ENCODE measurements at regions of chr3 and their contacts with region 1.

Region 1: GRCh38 chr3:99172736-99173657 is 271.5 kb upstream of the DCBLD2 start:
- DNase-seq: peak; percentile 76
- H3K4me3 ChIP-seq: no peak overlapping the region
- H3K27ac ChIP-seq: no peak overlapping the region
- H3K4me1 ChIP-seq: no peaks in the 10 kb centered on the region
- H3K27me3 ChIP-seq: no peaks in the 10 kb centered on the region
- CTCF ChIP-seq: peak; percentile 72 to 74
- POLR2A ChIP-seq: no peak

Region 2: DNA sequence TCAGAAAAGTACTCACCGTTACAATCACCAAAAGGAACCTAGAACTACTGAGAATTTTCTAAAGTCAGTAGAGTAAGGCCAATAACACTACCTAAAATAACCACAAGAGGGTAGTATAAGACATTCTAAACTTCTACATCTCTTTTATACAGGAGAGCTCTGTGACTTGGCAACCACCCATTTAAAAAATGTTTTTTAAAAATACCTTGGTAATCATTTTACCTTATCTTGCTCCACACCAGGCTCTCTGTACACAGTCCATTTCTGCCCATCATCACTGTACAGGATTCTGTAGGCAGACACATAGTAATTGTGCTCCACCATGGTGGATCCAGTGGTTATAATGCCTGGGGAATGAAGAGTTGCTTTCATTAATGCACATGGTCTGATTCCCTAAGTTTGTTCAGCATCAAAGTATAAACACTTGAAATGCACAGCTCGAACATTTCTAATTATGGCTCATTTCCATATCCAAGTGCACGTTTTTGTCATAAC is 355.4 kb before region 1 on chr3:
- CTCF ChIA-PET with region 1: interaction called, 15 read pairs
- POLR2A ChIA-PET with region 1: no interaction called
- dilution Hi-C with region 1: no loop called
- intact Hi-C with region 1: loop called (anchors 5 kb)
- DNase-seq: peak; percentile 66
- H3K4me3 ChIP-seq: no peak overlapping the region
- H3K27ac ChIP-seq: peak overlapping the region; percentile 34
- H3K4me1 ChIP-seq: peaks cover 8% of the 10 kb centered on the region
- H3K27me3 ChIP-seq: no peaks in the 10 kb centered on the region
- CTCF ChIP-seq: peak; percentile 27 to 34
- POLR2A ChIP-seq: no peak

Region 3: DNA sequence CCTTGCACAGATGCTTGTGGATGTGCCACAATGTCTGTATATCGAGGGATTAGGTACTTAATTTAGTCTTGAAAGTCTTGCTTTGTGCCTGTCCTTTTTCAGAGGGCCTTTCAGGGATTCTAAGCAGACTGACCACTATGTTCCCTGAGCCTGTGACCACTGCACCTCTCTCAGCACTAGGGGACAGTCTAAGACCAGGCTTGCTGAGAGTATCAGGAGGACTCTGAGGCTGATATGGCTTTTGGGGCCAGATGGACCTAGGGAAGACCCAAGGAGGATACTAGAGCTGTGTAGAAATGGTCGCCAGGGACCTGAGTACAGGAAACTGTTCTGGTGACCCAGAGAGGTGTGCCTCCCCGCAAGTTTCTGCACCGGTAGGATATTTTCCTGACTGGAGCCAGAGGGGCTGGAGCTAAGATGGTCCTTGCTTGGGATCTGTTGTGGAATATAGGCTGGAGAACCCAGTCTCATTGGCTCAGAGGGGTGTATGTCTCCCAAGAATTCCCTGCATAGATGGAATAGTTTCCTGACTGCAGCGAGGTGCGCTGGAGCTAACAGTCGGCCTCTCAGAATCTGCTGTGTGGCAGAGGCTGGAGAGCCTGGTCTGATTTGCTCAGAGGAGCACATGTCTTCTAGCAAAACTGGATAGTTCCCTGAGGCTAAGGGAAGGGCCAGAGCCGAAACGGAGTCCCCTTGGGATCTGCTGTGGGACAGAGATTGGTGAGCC is 58.3 kb before region 1 on chr3:
- CTCF ChIA-PET with region 1: interaction called, 111 read pairs
- POLR2A ChIA-PET with region 1: no interaction called
- dilution Hi-C with region 1: no loop called
- intact Hi-C with region 1: loop called (anchors 1 kb)
- DNase-seq: peak; percentile 70
- H3K4me3 ChIP-seq: no peak overlapping the region
- H3K27ac ChIP-seq: no peak overlapping the region
- H3K4me1 ChIP-seq: peaks cover under 1% of the 10 kb centered on the region
- H3K27me3 ChIP-seq: no peaks in the 10 kb centered on the region
- CTCF ChIP-seq: peak; percentile 90 to 91
- POLR2A ChIP-seq: no peak

Region 4: DNA sequence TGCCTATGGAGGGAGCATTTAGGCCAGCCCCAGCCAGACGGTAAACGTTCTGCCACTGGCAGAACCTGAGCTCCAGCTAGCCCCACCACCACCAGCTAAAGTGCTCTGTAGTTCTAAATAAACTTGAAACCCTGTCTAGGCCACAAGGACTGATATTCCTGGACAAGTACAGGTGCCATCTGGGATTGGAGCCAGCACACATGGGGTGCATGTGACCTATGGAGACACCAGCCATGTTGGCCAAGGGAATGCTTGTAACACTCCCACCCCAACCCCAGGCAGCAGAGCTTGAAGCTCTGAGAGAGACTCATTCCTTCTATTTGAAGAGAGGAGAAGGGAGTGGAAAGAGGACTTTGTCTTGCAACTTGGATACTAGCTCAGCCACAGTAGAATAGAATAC is 13.0 kb after region 1 on chr3:
- CTCF ChIA-PET with region 1: interaction called, 14 read pairs
- POLR2A ChIA-PET with region 1: no interaction called
- dilution Hi-C with region 1: no loop called
- intact Hi-C with region 1: no loop called
- DNase-seq: no peak
- H3K4me3 ChIP-seq: no peak overlapping the region
- H3K27ac ChIP-seq: no peak overlapping the region
- H3K4me1 ChIP-seq: no peaks in the 10 kb centered on the region
- H3K27me3 ChIP-seq: no peaks in the 10 kb centered on the region
- CTCF ChIP-seq: no peak
- POLR2A ChIP-seq: no peak

Region 5: GRCh38 chr3:99638167-99638948 is 465.4 kb after region 1 on chr3 and contains the start of gene COL8A1:
- CTCF ChIA-PET with region 1: no interaction called
- POLR2A ChIA-PET with region 1: no interaction called
- dilution Hi-C with region 1: no loop called
- intact Hi-C with region 1: loop called (anchors 5 kb)
- DNase-seq: peak; percentile 94
- H3K4me3 ChIP-seq: peak within 1 kb of the TSS; percentile 90 to 94 (median 91)
- H3K27ac ChIP-seq: peak within 1 kb of the TSS; percentile 100
- H3K4me1 ChIP-seq: peaks cover 72% of the 10 kb centered on the region
- H3K27me3 ChIP-seq: no peaks in the 10 kb centered on the region
- CTCF ChIP-seq: no peak
- POLR2A ChIP-seq: peak; percentile 94
- total RNA-seq, gene COL8A1: 217 and 358 TPM in 2 replicates

Measured in endothelial cell of umbilical vein (primary cell).